SK-N-SH (cell line): ENCODE measurements at regions of chr9 and their contacts with region 1.

Region 1: DNA sequence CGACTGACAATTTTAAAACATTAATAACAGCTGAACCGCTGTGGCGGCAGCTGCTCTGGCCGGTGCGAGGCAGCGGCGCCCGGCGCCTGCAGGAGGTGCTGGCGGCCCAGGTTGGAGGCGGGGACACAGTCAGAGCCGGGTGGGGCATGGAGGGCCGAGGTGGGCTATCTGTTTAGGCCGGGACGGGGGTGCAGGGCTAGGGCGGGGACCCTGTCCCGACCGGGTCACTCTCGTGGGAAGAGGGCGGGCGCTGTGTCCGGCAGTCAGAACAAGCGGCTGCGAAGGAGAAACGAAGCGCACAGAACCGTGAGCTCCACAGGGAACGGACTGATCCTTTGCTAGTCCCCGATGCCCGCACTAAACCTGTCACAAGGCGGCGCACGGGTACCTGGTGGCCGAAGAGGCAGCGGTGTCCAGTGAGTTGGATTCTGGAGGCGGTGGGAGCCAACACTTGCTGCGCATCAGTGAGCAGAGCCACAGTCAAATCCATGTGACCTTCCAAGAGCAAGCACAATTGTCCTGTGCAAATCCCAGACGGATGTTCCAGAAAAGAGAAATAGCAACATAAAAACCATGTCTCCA is 13.7 kb upstream of the ALDOB start:
- DNase-seq: peak; percentile 89
- H3K4me3 ChIP-seq: peak overlapping the region; percentile 63 to 83
- H3K27ac ChIP-seq: no peak overlapping the region
- H3K4me1 ChIP-seq: peaks cover 0 to 2% of the 10 kb centered on the region in 2 experiments; a peak in 1 of 4 replicates
- H3K27me3 ChIP-seq: no peaks in the 10 kb centered on the region
- CTCF ChIP-seq: peak; percentile 80
- EP300 ChIP-seq: no peak
- RAD21 ChIP-seq: peak; percentile 49

Region 2: GRCh38 chr9:101269591-101270283 is 179.5 kb before region 1 on chr9:
- CTCF ChIA-PET with region 1: no interaction called
- POLR2A ChIA-PET with region 1: no interaction called
- DNase-seq: no peak
- H3K4me3 ChIP-seq: no peak overlapping the region
- H3K27ac ChIP-seq: no peak overlapping the region
- H3K4me1 ChIP-seq: no peaks in the 10 kb centered on the region
- H3K27me3 ChIP-seq: no peaks in the 10 kb centered on the region
- CTCF ChIP-seq: no peak
- EP300 ChIP-seq: no peak
- RAD21 ChIP-seq: no peak

Region 3: DNA sequence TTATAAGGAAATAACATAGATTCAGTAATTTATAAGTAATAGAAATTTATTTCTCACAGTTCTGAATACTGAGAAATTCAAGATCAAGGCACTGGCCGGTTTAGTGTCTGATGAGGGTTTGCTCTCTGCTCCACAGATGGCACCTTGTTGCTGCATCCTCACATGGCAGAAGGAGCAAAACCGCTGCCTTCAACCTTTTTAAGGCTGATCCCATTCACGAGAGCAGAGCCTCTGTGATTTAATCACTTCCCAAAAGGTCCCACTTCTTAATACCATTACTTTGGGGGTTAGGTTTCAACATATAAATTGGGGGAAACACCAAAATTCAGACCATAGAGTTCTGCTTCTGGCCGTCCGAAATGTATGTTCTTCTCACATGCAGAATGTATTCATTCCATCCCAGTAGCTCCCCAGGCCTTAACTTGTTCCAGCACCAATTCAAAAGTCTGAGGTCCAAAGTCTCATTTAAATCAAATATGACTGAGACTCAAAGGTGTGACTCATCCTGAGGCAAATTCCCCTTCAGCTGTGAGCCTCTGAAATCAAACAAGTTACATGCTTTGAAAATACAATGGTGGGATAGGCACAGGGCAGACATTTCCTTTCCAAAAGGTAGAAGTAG is 95.0 kb before region 1 on chr9:
- CTCF ChIA-PET with region 1: no interaction called
- POLR2A ChIA-PET with region 1: no interaction called
- DNase-seq: no peak
- H3K4me3 ChIP-seq: no peak overlapping the region
- H3K27ac ChIP-seq: no peak overlapping the region
- H3K4me1 ChIP-seq: no peaks in the 10 kb centered on the region
- H3K27me3 ChIP-seq: no peaks in the 10 kb centered on the region
- CTCF ChIP-seq: no peak
- EP300 ChIP-seq: no peak
- RAD21 ChIP-seq: no peak

Region 4: DNA sequence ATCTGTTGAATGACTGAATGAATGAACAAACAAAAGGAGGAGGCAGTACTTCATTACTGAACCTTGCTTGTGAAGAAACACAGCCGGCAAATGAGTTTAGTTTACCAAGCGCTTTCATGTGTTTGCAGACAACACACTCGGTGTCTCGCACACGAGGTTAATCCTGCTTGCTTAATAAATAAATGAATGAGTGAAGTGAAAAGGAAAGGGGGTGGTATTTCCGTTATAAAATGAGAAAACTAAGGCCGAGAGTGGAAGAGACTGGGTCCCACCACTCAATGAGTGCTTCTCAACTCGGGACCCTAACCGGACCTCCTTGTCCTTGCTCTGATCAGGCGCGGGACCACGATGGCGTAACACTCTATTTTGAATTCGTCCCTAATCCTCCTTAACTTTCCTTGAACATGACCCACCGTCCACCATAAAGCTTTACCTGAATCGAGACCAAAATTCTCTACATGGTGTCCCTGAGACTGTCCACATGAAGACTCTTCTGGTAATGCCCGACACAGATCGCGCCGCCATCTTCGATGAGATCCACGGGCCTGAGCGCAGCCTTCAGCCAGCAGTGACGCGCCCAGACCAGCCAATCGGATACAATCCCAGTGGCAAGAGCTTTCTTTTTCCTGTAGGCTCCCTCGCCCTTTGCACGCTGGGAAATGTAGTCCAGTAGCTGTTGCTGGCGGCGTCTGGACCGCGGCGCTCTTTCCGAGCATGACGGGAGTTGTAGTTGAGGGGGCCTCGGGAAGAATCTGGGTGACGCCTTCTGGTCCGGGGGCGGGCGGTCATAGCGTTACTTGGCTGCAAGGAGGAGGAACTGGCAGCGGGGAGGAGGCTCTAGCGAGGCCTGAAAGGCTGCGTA is 50.9 kb before region 1 on chr9 and contains the starts of genes MRPL50 and ZNF189:
- CTCF ChIA-PET with region 1: interaction called, 10 read pairs
- POLR2A ChIA-PET with region 1: no interaction called
- DNase-seq: peak; percentile 86
- H3K4me3 ChIP-seq: peak within 1 kb of the TSS; percentile 79 to 88
- H3K27ac ChIP-seq: peak within 1 kb of the TSS; percentile 74 to 78
- H3K4me1 ChIP-seq: peaks cover 7% of the 10 kb centered on the region in 2 experiments; a peak in 2 of 4 replicates
- H3K27me3 ChIP-seq: no peaks in the 10 kb centered on the region
- CTCF ChIP-seq: no peak
- EP300 ChIP-seq: no peak
- RAD21 ChIP-seq: no peak
- polyA plus RNA-seq, gene MRPL50: 6.3 and 8.6 TPM in 2 replicates
- polyA plus RNA-seq, gene ZNF189: 2.9 and 3.4 TPM in 2 replicates

Region 5: GRCh38 chr9:101437806-101438232 is 11.4 kb before region 1 on chr9:
- CTCF ChIA-PET with region 1: interaction called, 20 read pairs
- POLR2A ChIA-PET with region 1: no interaction called
- DNase-seq: no peak
- H3K4me3 ChIP-seq: no peak overlapping the region
- H3K27ac ChIP-seq: no peak overlapping the region
- H3K4me1 ChIP-seq: no peaks in the 10 kb centered on the region; a peak in 1 of 4 replicates
- H3K27me3 ChIP-seq: no peaks in the 10 kb centered on the region
- CTCF ChIP-seq: no peak
- EP300 ChIP-seq: no peak
- RAD21 ChIP-seq: no peak

Region 6: DNA sequence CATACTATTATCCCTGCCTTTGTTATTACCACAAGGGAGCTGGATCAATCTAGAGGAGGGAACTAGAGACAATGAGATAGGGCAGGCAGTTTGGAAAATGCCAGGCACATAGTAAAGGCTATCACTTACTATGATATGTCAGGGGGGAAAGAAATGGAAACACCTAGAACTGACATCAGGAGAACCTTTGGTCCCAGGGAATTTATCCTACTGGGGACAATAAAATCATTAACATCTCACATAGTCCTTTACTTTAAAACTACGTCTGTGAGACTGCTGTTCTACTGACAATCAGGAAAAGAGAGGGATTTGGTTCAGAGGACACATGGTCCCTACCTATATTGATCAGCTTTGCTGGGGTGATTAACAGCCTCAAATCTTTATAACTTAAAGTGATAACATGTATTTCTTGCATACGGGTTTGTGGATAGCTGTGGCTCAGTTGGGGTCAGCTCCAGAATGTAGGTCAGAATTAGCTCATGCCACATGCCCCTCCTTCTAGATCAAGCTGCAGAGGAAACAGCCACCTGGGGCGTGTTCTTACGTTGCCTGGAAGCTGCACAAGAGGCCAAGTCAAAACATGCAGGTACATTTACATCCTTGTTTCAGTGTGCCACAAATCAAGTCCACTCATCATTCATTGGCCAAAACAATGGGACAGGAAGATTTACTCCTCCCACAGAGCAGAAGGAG is 30.3 kb after region 1 on chr9:
- CTCF ChIA-PET with region 1: interaction called, 50 read pairs
- POLR2A ChIA-PET with region 1: no interaction called
- DNase-seq: no peak
- H3K4me3 ChIP-seq: no peak overlapping the region
- H3K27ac ChIP-seq: no peak overlapping the region
- H3K4me1 ChIP-seq: no peaks in the 10 kb centered on the region
- H3K27me3 ChIP-seq: no peaks in the 10 kb centered on the region
- CTCF ChIP-seq: no peak
- EP300 ChIP-seq: no peak
- RAD21 ChIP-seq: no peak

Region 7: GRCh38 chr9:101530077-101530711 is 81.0 kb after region 1 on chr9:
- CTCF ChIA-PET with region 1: interaction called, 363 read pairs
- POLR2A ChIA-PET with region 1: interaction called, 6 read pairs
- DNase-seq: peak; percentile 57
- H3K4me3 ChIP-seq: no peak overlapping the region; a peak in 1 of 4 replicates
- H3K27ac ChIP-seq: no peak overlapping the region
- H3K4me1 ChIP-seq: peaks cover 0 to 5% of the 10 kb centered on the region in 2 experiments; a peak in 2 of 4 replicates
- H3K27me3 ChIP-seq: no peaks in the 10 kb centered on the region
- CTCF ChIP-seq: peak; percentile 90
- EP300 ChIP-seq: no peak
- RAD21 ChIP-seq: peak; percentile 86

Region 8: DNA sequence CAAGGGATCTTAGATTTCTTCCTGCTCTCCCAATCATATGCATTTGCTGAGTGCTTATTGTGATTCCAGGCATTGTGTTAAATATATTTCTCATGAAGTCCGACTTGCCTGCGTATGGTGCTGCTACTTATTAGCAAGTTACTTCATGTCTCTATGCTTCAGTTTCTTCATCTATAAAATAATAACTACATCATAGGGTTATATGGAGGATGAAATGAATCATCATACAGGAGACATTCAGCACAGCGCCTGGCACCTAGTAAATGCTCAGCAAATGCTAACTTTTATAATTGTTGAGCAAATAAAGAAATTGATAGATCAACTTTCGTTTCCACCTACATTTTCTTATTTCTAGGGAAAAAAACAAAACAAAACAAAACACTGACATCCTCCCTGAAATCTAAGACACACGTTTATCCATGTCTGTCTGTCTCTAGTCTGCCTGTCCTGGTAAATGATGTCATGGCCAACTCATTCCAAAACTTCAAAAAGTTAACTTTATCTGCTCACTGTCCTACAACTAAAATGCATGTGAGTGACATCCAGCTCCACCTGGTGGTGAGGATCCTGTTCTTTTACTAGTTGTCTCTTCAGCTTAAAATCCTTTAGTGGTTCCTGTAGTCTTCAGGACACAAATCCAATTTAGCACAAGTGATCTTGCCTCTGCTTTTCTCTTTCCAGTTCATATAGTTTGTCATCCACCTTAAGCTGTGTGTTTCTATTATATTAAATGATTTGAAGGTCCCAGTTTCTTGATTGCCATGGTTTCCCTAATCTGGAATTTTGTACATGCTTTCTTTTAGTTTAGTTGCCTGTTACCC is 117.9 kb after region 1 on chr9:
- CTCF ChIA-PET with region 1: interaction called, 10 read pairs
- POLR2A ChIA-PET with region 1: no interaction called
- DNase-seq: no peak
- H3K4me3 ChIP-seq: no peak overlapping the region
- H3K27ac ChIP-seq: no peak overlapping the region
- H3K4me1 ChIP-seq: peaks cover 0 to 3% of the 10 kb centered on the region in 2 experiments; a peak in 1 of 4 replicates
- H3K27me3 ChIP-seq: no peaks in the 10 kb centered on the region
- CTCF ChIP-seq: peak; percentile 67
- EP300 ChIP-seq: no peak
- RAD21 ChIP-seq: peak; percentile 27

Region 9: DNA sequence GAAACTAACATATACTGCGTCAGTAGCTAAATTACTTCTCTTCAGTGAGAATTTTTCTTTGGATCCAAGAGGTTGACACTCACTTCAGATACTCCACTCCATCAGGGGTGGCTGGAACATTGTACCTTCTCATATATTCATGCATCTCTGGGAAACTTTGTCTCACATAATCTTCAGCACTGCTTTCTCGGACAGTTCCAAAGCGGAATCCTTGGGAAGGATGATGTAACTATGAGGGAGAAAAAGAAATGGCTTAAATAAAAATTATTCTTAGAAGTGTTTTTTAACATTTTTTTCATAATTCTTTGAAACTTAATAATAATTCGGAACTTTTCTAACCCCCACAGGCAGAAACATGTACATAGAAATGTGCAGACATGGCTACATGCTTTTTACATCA is 178.9 kb after region 1 on chr9:
- CTCF ChIA-PET with region 1: no interaction called
- POLR2A ChIA-PET with region 1: no interaction called
- DNase-seq: no peak
- H3K4me3 ChIP-seq: no peak overlapping the region
- H3K27ac ChIP-seq: no peak overlapping the region
- H3K4me1 ChIP-seq: no peaks in the 10 kb centered on the region
- H3K27me3 ChIP-seq: no peaks in the 10 kb centered on the region; the same call in 1 of the 2 replicates
- CTCF ChIP-seq: no peak
- EP300 ChIP-seq: no peak
- RAD21 ChIP-seq: no peak